OCI-LY7 (cell line): ENCODE measurements at regions of chr5 and their contacts with region 1.

Region 1: DNA sequence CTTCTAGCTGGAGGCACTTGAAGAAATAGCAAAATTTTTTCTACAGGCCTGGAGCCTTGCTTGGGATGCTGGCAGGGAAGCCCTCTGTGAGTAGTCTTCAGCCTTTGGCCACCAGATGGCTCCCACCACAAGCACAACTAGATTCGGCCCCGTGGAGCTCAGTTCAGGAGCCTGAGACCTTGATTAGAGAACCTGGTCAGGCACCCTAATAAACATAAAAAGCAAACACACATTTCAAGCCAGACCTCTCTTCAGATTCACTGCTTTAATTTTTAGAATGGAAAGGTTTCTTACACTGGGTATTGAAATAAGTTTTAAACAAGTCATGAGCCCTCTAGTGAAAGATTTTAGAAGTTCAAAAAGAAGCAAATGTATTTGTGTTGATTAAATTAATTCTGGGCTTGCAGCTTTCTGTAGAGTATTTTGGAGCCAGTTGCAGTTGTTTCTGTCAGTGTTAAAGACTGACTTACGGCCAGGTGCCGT is 41.4 kb downstream of the GLRX start:
- DNase-seq: peak; percentile 88
- H3K4me3 ChIP-seq: no peak overlapping the region
- H3K27ac ChIP-seq: no peak overlapping the region
- H3K4me1 ChIP-seq: no peaks in the 10 kb centered on the region
- CTCF ChIP-seq: peak; percentile 100

Region 2: DNA sequence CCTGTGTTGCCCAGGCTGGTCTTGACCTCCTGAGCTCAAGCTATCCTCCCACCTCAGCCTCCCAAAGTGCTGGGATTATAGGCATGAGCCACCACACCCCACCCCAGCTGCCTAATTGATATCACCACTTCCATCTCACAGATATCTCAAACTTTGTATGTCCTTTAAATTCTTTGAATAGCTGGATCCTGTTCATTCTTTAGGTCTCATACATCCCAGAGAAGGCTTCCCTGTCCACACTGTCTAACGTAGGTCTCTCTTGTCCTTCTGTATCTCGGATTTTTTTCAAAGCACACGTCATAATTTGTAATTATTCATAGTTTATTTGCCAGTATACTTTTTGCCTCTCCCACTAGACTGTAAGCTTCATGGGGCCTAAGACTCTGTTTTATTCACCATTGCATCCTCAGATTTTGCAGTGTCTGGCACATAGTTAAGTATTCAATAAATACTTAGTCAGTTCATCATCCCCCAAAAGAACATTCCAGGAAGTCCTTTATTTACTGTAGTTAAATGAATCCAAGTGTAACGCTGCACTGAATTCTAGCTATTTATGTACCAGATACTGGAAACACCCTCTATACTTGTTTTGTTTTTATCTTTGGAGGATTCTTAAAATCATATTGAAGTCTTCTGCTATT is 215.7 kb before region 1 on chr5:
- CTCF ChIA-PET with region 1: no interaction called
- POLR2A ChIA-PET with region 1: no interaction called
- intact Hi-C with region 1: no loop called
- DNase-seq: no peak
- H3K4me3 ChIP-seq: no peak overlapping the region
- H3K27ac ChIP-seq: no peak overlapping the region
- H3K4me1 ChIP-seq: no peaks in the 10 kb centered on the region
- CTCF ChIP-seq: no peak

Region 3: GRCh38 chr5:95664204-95664786 is 116.8 kb before region 1 on chr5:
- CTCF ChIA-PET with region 1: no interaction called
- POLR2A ChIA-PET with region 1: interaction called, 4 read pairs
- intact Hi-C with region 1: loop called (anchors 5 kb)
- DNase-seq: peak; percentile 42
- H3K4me3 ChIP-seq: no peak overlapping the region
- H3K27ac ChIP-seq: no peak overlapping the region
- H3K4me1 ChIP-seq: no peaks in the 10 kb centered on the region
- CTCF ChIP-seq: peak; percentile 98

Region 4: GRCh38 chr5:95808686-95809413 is 27.7 kb after region 1 on chr5:
- CTCF ChIA-PET with region 1: interaction called, 4 read pairs
- POLR2A ChIA-PET with region 1: interaction called, 20 read pairs
- intact Hi-C with region 1: loop called (anchors 1 kb)
- DNase-seq: peak; percentile 97
- H3K4me3 ChIP-seq: peak overlapping the region; percentile 53
- H3K27ac ChIP-seq: peak overlapping the region; percentile 80
- H3K4me1 ChIP-seq: peaks cover 34% of the 10 kb centered on the region
- CTCF ChIP-seq: no peak

Region 5: GRCh38 chr5:95822542-95823181 is 41.5 kb after region 1 on chr5 and contains the start of gene GLRX:
- CTCF ChIA-PET with region 1: interaction called, 5 read pairs
- POLR2A ChIA-PET with region 1: interaction called, 11 read pairs
- intact Hi-C with region 1: loop called (anchors 1 kb)
- DNase-seq: peak; percentile 82
- H3K4me3 ChIP-seq: peak within 1 kb of the TSS; percentile 91
- H3K27ac ChIP-seq: peak within 1 kb of the TSS; percentile 87
- H3K4me1 ChIP-seq: peaks cover 57% of the 10 kb centered on the region
- CTCF ChIP-seq: no peak
- total RNA-seq, gene GLRX: 26.7 and 80.5 TPM in 2 replicates

Region 6: GRCh38 chr5:95846554-95847260 is 65.6 kb after region 1 on chr5:
- CTCF ChIA-PET with region 1: interaction called, 11 read pairs
- POLR2A ChIA-PET with region 1: interaction called, 13 read pairs
- intact Hi-C with region 1: loop called (anchors 1 kb)
- DNase-seq: peak; percentile 81
- H3K4me3 ChIP-seq: no peak overlapping the region
- H3K27ac ChIP-seq: no peak overlapping the region
- H3K4me1 ChIP-seq: peaks cover 6% of the 10 kb centered on the region
- CTCF ChIP-seq: peak; percentile 99

Region 7: GRCh38 chr5:95961617-95962474 is 180.7 kb after region 1 on chr5 and contains the start of gene ELL2:
- CTCF ChIA-PET with region 1: no interaction called
- POLR2A ChIA-PET with region 1: interaction called, 3 read pairs
- intact Hi-C with region 1: loop called (anchors 10 kb)
- DNase-seq: peak; percentile 88
- H3K4me3 ChIP-seq: peak within 1 kb of the TSS; percentile 70
- H3K27ac ChIP-seq: no peak within 1 kb of the TSS
- H3K4me1 ChIP-seq: peaks cover 5% of the 10 kb centered on the region
- CTCF ChIP-seq: no peak
- total RNA-seq, gene ELL2: 0.98 and 2.1 TPM in 2 replicates

Region 8: GRCh38 chr5:96336351-96336985 is 555.3 kb after region 1 on chr5:
- CTCF ChIA-PET with region 1: no interaction called
- POLR2A ChIA-PET with region 1: no interaction called
- intact Hi-C with region 1: loop called (anchors 5 kb)
- DNase-seq: peak; percentile 65
- H3K4me3 ChIP-seq: no peak overlapping the region
- H3K27ac ChIP-seq: no peak overlapping the region
- H3K4me1 ChIP-seq: no peaks in the 10 kb centered on the region
- CTCF ChIP-seq: peak; percentile 94

Region 9: GRCh38 chr5:96984506-96985192 is 1203.5 kb after region 1 on chr5:
- CTCF ChIA-PET with region 1: no interaction called
- POLR2A ChIA-PET with region 1: no interaction called
- intact Hi-C with region 1: no loop called
- DNase-seq: no peak
- H3K4me3 ChIP-seq: no peak overlapping the region
- H3K27ac ChIP-seq: no peak overlapping the region
- H3K4me1 ChIP-seq: no peaks in the 10 kb centered on the region
- CTCF ChIP-seq: no peak